Lower leg skin (tissue), 4 donors: ENCODE measurements at regions of chr6 and their contacts with region 1.

Region 1: DNA sequence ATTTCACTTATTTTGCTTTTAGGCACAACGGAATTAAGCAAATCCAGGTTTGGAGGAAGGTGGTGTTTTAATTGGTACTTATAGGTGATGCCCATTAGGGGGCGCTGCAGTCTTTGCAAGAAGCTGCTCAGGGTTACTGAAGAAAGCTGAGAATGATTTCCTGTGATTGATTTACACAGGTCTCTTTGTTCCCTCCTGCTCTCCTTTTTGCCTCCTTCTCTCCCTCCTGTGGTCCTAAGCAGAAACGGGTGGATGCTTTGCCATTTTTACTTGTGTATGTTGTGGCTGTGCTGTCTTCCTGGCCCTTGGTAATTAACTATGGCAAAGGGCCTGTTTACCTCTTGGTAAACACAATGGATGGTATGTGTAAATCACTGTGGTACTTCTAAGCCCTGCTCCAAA is 97.8 kb downstream of the ANKS1A start:
- DNase-seq: peak; percentile 65 to 90
- H3K4me3 ChIP-seq: no peak overlapping the region
- CTCF ChIP-seq: peak in 1 of 3 donors; percentile 75
- POLR2A ChIP-seq: no peak

Region 2: GRCh38 chr6:35008853-35009252 is 22.0 kb after region 1 on chr6:
- intact Hi-C with region 1: no loop called
- DNase-seq: no peak
- H3K4me3 ChIP-seq: no peak overlapping the region
- CTCF ChIP-seq: no peak
- POLR2A ChIP-seq: no peak

Region 3: GRCh38 chr6:35139908-35140655 is 153.2 kb after region 1 on chr6:
- intact Hi-C with region 1: loop called (anchors 5 kb)
- DNase-seq: no peak
- H3K4me3 ChIP-seq: no peak overlapping the region
- CTCF ChIP-seq: peak in 1 of 3 donors; percentile 56
- POLR2A ChIP-seq: no peak

Region 4: GRCh38 chr6:35240840-35241801 is 254.3 kb after region 1 on chr6:
- intact Hi-C with region 1: loop called (anchors 10 kb)
- DNase-seq: peak; percentile 60 to 92
- H3K4me3 ChIP-seq: no peak overlapping the region
- CTCF ChIP-seq: peak in 1 of 3 donors; percentile 62
- POLR2A ChIP-seq: no peak